ENCODE measurements at regions of chr20 and their contacts with region 1.

Region 1: GRCh38 chr20:12201289-12201991 is 283.7 kb downstream of the BTBD3 start:
- DNase-seq: peak; percentile 26
- H3K4me3 ChIP-seq: no peak overlapping the region
- H3K27ac ChIP-seq: no peak overlapping the region
- H3K4me1 ChIP-seq: no peaks in the 10 kb centered on the region
- H3K27me3 ChIP-seq: no peaks in the 10 kb centered on the region
- CTCF ChIP-seq: no peak

Region 2: DNA sequence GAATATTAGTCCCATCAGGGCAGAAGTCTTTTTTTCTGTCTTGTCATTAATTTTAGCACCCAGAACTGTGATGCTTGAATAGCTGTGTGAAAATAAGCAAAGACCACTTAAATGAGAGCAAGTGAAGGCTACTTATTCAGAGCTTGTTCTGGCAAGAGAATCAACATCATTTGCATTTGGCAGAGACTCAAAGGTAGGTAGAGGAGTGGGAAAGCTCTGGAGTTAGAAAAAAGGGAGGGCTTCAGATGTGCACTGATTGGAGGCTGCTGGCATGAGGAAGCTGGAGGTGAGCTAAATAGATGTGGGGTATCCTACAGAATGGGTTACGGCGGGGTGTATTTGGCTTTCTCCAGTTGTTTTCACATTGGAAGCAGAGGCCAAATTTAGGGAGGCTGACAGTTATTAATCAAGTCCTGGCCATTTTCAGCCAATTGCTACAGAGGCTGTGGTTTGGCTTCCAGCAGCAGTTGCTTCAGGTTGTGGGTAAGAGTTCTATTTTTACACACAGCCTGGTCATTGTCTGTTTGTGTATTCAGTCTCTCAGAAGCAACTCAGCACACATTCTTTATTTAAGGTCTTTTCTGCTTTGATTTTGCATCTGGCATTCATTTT is 29.4 kb before region 1 on chr20:
- CTCF ChIA-PET with region 1: no interaction called
- POLR2A ChIA-PET with region 1: no interaction called
- intact Hi-C with region 1: no loop called
- DNase-seq: no peak
- H3K4me3 ChIP-seq: no peak overlapping the region
- H3K27ac ChIP-seq: no peak overlapping the region
- H3K4me1 ChIP-seq: no peaks in the 10 kb centered on the region
- H3K27me3 ChIP-seq: no peaks in the 10 kb centered on the region
- CTCF ChIP-seq: no peak

Region 3: DNA sequence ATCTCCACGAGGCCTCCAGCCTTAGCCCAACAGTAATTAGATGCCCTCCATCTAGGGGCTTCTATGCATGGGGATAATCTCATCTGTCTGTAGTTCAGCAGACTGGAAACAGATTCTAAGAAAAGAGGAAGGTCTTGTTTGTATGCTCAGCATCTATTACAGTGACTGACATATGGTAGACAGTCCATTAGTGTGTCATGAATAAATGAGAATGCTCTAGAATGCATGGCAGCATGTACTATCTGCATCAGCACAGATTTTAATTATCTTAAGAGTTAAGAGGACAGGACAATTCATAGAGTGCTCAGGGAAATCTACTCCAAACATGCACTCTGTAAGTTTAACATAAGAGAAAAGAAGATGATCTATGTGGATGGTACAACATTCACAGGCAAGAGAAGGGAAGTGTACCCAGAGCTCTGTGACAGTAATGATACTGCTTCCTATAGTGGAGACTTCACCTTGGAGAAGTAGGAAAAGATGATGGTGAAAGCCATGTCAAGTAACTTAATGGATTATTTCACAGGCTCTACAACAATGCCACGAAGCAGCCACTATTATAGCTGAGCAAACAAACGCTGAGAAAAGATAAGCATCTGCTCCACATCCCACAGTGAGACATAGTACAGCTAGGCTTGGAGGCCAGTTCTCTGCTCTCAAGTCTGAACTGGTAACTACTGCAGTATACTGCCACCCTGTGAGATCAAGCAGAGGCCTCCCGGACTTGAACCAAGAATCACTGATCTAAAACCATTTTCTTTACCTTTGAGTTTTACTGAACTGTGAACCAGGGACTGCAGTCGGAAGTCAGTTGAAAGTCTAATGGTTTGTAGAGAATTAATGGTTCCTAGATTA is 498.2 kb after region 1 on chr20:
- CTCF ChIA-PET with region 1: interaction called, 13 read pairs
- POLR2A ChIA-PET with region 1: no interaction called
- intact Hi-C with region 1: no loop called
- DNase-seq: no peak
- H3K4me3 ChIP-seq: no peak overlapping the region
- H3K27ac ChIP-seq: no peak overlapping the region
- H3K4me1 ChIP-seq: no peaks in the 10 kb centered on the region
- H3K27me3 ChIP-seq: no peaks in the 10 kb centered on the region
- CTCF ChIP-seq: no peak